Panc1 (cell line): ENCODE measurements at regions of chr1 and their contacts with region 1.

Region 1: GRCh38 chr1:228664399-228664914 is 70.8 kb upstream of the RHOU start:
- DNase-seq: peak; percentile 67
- ATAC-seq: peak; percentile 78
- H3K4me3 ChIP-seq: peak overlapping the region; percentile 18 to 21; a peak in 3 of 4 replicates
- H3K27ac ChIP-seq: no peak overlapping the region
- H3K4me1 ChIP-seq: no peaks in the 10 kb centered on the region
- H3K27me3 ChIP-seq: no peaks in the 10 kb centered on the region
- CTCF ChIP-seq: peak; percentile 91

Region 2: DNA sequence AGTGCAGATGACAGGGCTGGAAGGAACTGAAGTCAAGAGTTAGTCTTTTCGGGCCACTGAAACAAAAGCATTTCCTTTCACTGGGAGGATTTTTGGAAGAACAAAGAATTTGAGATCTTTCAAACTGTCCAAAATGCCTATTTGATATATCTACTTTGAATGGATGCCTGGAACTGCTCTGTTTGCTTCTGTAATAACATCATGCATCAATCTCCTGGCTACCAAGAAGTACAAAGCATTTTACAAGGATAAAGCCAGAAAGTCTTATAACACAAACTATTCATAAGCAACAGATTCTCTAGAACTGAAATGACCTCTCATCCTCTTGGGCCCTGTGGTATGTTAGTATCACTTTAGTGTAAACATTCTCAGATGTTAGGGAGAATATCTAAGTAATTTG is 52.6 kb after region 1 on chr1:
- CTCF ChIA-PET with region 1: interaction called, 11 read pairs
- POLR2A ChIA-PET with region 1: no interaction called
- in situ Hi-C with region 1: no loop called
- intact Hi-C with region 1: no loop called
- DNase-seq: no peak
- ATAC-seq: no peak
- H3K4me3 ChIP-seq: no peak overlapping the region
- H3K27ac ChIP-seq: no peak overlapping the region
- H3K4me1 ChIP-seq: no peaks in the 10 kb centered on the region
- H3K27me3 ChIP-seq: no peaks in the 10 kb centered on the region
- CTCF ChIP-seq: no peak